ENCODE measurements at regions of chr9 and their contacts with region 1.

Region 1: GRCh38 chr9:87569518-87569917 is 71.9 kb downstream of the DAPK1 start:
- DNase-seq: peak; percentile 95
- H3K4me3 ChIP-seq: peak overlapping the region in 1 of 3 experiments; percentile 21
- H3K27ac ChIP-seq: peak overlapping the region; percentile 19
- H3K4me1 ChIP-seq: peaks cover 30% of the 10 kb centered on the region
- H3K27me3 ChIP-seq: no peaks in the 10 kb centered on the region
- CTCF ChIP-seq: no peak
- POLR2A ChIP-seq: peak; percentile 68

Region 2: DNA sequence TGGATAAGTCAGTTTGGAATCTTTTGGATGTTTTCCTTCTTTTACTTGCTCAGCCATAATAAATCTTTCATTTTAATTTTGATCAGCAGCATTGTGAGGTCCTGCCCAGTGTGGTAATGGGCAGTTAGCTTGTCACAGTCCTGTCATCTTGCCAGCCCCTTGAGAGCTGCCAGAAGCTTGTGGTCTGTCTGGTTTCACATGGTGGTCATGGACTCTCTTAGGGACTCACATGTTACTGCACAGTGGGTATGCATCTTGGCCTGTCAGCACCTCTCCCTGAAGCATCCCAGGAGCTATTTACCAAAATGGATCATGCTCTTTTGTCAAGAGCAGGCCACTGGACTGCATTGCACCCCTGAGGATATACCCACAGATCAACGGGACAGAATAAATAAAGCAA is 11.5 kb before region 1 on chr9:
- CTCF ChIA-PET with region 1: interaction called, 11 read pairs
- POLR2A ChIA-PET with region 1: no interaction called
- dilution Hi-C with region 1: no loop called
- intact Hi-C with region 1: no loop called
- DNase-seq: no peak
- H3K4me3 ChIP-seq: no peak overlapping the region
- H3K27ac ChIP-seq: no peak overlapping the region
- H3K4me1 ChIP-seq: no peaks in the 10 kb centered on the region
- H3K27me3 ChIP-seq: no peaks in the 10 kb centered on the region
- CTCF ChIP-seq: no peak
- POLR2A ChIP-seq: no peak